ENCODE measurements at regions of chr9 and their contacts with region 1.

Region 1: GRCh38 chr9:70398145-70398556 is 16.3 kb downstream of the KLF9 start:
- DNase-seq: no peak
- H3K4me3 Mint-ChIP-seq: peak overlapping the region; percentile 48
- H3K27ac Mint-ChIP-seq: peak overlapping the region; percentile 79
- H3K4me1 Mint-ChIP-seq: peaks cover 72% of the 10 kb centered on the region
- H3K27me3 Mint-ChIP-seq: no peaks in the 10 kb centered on the region

Region 2: GRCh38 chr9:70352802-70353201 is 45.3 kb before region 1 on chr9:
- CTCF ChIA-PET with region 1: no interaction called
- POLR2A ChIA-PET with region 1: no interaction called
- intact Hi-C with region 1: loop called (anchors 2 kb)
- DNase-seq: no peak
- H3K4me3 Mint-ChIP-seq: no peak overlapping the region
- H3K27ac Mint-ChIP-seq: no peak overlapping the region
- H3K4me1 Mint-ChIP-seq: no peaks in the 10 kb centered on the region
- H3K27me3 Mint-ChIP-seq: no peaks in the 10 kb centered on the region

Region 3: DNA sequence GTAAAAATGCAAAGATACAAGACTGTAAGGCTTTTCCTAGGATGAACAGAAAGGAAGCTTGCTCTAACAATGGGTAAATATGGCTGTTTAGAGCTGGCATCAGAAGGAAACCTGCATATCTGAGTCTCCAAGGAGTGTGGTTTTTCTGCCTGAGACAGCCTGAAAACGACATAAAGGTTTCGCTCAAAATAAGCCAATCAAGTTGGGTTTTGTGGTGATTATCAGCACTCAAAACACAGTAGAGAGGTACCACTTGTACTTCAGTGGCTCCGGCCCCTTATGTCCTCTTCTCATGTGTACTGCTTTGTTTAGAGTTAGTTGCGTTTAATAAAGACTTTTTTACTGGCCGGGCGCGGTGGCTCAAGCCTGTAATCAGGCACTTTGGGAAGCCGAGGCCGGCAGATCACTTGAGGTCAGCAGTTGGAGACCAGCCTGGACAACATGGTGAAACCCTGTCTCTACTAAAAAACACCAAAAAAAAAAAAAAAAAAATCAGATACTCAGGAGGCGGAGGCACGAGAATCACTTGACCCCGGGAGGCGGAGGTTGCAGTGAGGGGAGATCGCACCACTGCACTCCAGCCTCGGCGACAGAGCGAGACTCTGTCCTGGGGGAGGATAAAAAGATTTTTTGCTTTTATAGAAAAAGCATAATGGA is 23.1 kb before region 1 on chr9:
- CTCF ChIA-PET with region 1: no interaction called
- POLR2A ChIA-PET with region 1: no interaction called
- intact Hi-C with region 1: no loop called
- DNase-seq: no peak
- H3K4me3 Mint-ChIP-seq: no peak overlapping the region
- H3K27ac Mint-ChIP-seq: no peak overlapping the region
- H3K4me1 Mint-ChIP-seq: no peaks in the 10 kb centered on the region
- H3K27me3 Mint-ChIP-seq: no peaks in the 10 kb centered on the region

Region 4: GRCh38 chr9:70413798-70414775 is 15.9 kb after region 1 on chr9 and contains the start of gene KLF9:
- CTCF ChIA-PET with region 1: no interaction called
- POLR2A ChIA-PET with region 1: interaction called, 5 read pairs
- intact Hi-C with region 1: loop called (anchors 2 kb)
- DNase-seq: peak; percentile 96
- H3K4me3 Mint-ChIP-seq: peak within 1 kb of the TSS; percentile 97
- H3K27ac Mint-ChIP-seq: peak within 1 kb of the TSS; percentile 100
- H3K4me1 Mint-ChIP-seq: peaks cover 37% of the 10 kb centered on the region
- H3K27me3 Mint-ChIP-seq: peaks cover 2% of the 10 kb centered on the region
- total RNA-seq, gene KLF9: 23.7 to 24.5 TPM

Measured in activated CD4-positive, alpha-beta memory T cell treated with anti-CD3 and anti-CD28 coated beads for 36 hours (primary cell).